ENCODE measurements at regions of chr9 and their contacts with region 1.

Region 1: GRCh38 chr9:95875305-95876137 is at the start of gene ERCC6L2:
- DNase-seq: peak; percentile 97
- ATAC-seq: peak; percentile 87
- H3K4me3 Mint-ChIP-seq: no peak within 1 kb of the TSS
- H3K27ac Mint-ChIP-seq: no peak within 1 kb of the TSS
- H3K4me1 Mint-ChIP-seq: peaks cover 29% of the 10 kb centered on the region
- H3K27me3 Mint-ChIP-seq: no peaks in the 10 kb centered on the region
- total RNA-seq, gene ERCC6L2: 33.0 to 38.5 TPM

Region 2: DNA sequence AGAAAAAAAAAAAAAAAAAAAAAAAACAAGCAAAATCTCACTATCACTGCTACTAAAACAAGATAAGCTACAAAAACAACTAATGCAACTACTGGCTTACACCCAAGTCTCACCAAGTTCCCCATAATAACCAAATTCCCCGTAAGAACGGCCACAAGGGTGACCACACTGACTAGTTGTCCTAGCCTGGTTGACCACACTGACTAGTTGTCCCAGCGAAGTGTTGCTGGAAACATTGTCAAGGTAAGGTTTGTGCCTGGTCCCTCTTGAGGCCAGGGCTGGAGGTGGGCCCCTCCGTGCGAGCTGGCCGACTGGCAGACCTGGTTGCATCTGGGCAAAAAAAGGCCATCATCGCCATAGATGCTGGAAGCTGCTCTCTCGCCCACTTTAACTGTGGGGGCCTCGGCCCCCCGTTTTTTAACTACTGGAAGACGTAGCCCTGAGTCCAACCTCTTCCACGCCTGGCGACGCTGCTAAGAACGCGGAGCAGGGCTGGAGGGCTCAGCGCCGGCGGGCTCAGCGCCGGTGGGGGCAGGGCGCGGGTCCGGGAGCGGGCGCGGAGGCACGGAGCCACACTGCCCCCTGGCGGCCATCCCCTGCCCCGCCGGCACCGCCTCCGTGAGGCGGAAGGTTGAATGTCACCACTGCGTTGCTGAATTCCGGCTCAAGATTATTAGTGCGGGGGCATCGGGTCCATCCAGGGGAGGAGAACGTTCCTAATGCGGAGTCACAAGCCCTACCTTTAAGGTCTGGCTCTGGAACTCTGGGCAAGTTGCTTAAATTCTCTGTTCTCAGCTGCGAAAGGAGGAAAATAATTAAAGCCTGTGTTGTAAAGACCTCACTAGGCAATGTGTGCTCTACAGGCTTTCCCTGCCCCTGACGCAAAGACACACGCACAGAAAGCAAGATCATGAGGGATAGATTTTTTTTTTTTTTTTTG is 342.5 kb after region 1 on chr9:
- CTCF ChIA-PET with region 1: interaction called, 10 read pairs
- DNase-seq: peak; percentile 79
- ATAC-seq: peak; percentile 94
- H3K4me3 Mint-ChIP-seq: peak overlapping the region; percentile 54
- H3K27ac Mint-ChIP-seq: peak overlapping the region; percentile 61
- H3K4me1 Mint-ChIP-seq: peaks cover 26% of the 10 kb centered on the region
- H3K27me3 Mint-ChIP-seq: peaks cover 77% of the 10 kb centered on the region

Region 3: GRCh38 chr9:96391021-96391765 is 515.7 kb after region 1 on chr9:
- CTCF ChIA-PET with region 1: no interaction called
- DNase-seq: peak; percentile 33
- ATAC-seq: peak; percentile 51
- H3K4me3 Mint-ChIP-seq: no peak overlapping the region
- H3K27ac Mint-ChIP-seq: peak overlapping the region; percentile 62
- H3K4me1 Mint-ChIP-seq: peaks cover 12% of the 10 kb centered on the region
- H3K27me3 Mint-ChIP-seq: no peaks in the 10 kb centered on the region